AG04450 (cell line): ENCODE measurements at regions of chr10 and their contacts with region 1.

Region 1: DNA sequence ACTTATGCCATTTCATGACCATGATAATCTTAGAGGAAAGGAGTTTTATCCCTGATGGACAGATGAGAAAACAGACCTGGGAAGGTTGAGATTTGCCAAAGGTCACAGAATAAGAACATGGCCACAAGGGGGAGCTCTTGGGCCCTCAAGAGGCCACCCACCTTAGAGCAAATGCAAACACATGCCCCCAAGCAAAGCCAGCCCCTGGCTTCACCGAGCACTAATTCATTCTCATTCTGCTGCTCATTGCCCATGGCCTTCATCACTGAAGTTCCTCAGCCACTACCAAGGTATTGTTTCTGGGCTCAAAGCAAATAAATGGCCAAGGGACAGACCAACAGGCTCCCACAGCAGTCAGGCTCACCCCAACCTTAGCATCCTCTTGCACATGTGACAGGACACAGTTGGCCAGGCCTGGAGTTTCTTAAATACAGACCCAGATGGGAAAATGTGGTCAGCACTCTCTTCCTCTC is 44.2 kb downstream of the PDLIM1 start:
- DNase-seq: no peak
- H3K4me3 ChIP-seq: no peak overlapping the region
- H3K27ac ChIP-seq: peak overlapping the region; percentile 93
- H3K27me3 ChIP-seq: no peaks in the 10 kb centered on the region
- CTCF ChIP-seq: peak; percentile 78

Region 2: DNA sequence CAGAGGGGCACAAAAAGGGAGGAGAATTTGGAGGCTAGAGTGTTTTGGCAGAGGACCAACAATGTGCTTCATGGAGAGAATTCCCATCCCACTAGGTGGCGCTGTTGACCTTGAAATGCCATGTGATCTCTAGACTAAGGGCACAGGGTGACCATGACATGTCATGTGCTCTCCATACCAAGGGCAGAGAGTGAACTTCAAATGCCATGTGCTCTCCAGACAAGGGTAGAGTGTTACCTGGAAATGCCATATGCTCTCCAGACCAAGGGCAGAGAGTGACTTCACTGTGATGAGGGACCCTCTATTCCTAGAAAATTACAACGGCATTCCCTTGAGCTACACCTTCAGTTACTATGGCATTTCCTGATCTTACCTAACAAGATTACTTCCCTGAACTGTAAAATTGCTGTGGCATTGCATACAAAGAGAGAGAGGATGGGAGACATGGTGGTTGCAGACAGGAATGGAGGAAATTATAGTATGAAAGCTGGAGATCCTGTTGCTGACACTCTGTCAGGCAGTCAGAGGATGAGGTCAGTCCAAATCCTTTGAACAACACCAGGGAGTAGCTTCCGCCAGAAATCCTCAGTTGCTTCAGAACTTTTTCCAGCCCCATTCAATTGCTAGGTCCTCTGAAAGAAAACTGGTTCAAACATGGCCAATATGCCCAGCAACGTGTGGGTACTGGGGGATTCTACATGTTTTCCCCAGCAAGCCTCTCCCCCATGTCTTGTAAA is 113.4 kb before region 1 on chr10:
- CTCF ChIA-PET with region 1: interaction called, 24 read pairs
- POLR2A ChIA-PET with region 1: interaction called, 6 read pairs
- DNase-seq: peak; percentile 39
- H3K4me3 ChIP-seq: no peak overlapping the region
- H3K27ac ChIP-seq: no peak overlapping the region
- H3K27me3 ChIP-seq: peaks cover 3% of the 10 kb centered on the region
- CTCF ChIP-seq: peak; percentile 78

Region 3: GRCh38 chr10:95208702-95209391 is 37.8 kb before region 1 on chr10:
- CTCF ChIA-PET with region 1: interaction called, 28 read pairs
- POLR2A ChIA-PET with region 1: no interaction called
- DNase-seq: no peak
- H3K4me3 ChIP-seq: no peak overlapping the region
- H3K27ac ChIP-seq: no peak overlapping the region
- H3K27me3 ChIP-seq: no peaks in the 10 kb centered on the region
- CTCF ChIP-seq: peak; percentile 56

Region 4: DNA sequence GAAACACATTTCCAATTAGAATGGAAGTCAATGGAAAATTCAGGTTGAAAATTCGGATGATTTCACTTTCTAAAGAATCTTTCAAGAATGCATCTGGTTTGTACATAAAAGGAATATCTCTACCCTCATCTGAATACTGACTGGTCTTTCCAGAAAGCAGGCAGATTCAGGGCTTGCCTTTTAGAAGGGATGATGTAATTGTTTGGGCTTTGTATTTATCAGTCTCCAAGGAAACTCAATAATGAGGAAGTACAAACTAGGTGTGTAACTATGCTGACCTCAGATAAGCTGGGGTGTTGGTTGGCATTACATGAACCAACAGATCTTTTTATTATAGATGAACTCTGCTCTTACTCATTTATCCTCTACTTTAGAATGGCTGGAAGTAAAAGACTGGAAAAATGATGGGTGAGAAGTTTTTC is 20.1 kb after region 1 on chr10:
- CTCF ChIA-PET with region 1: interaction called, 19 read pairs
- POLR2A ChIA-PET with region 1: no interaction called
- DNase-seq: no peak
- H3K4me3 ChIP-seq: no peak overlapping the region
- H3K27ac ChIP-seq: peak overlapping the region; percentile 62
- H3K27me3 ChIP-seq: no peaks in the 10 kb centered on the region
- CTCF ChIP-seq: no peak

Region 5: GRCh38 chr10:95289003-95289920 is 42.6 kb after region 1 on chr10:
- CTCF ChIA-PET with region 1: interaction called, 14 read pairs
- POLR2A ChIA-PET with region 1: interaction called, 6 read pairs
- DNase-seq: no peak
- H3K4me3 ChIP-seq: peak overlapping the region; percentile 92
- H3K27ac ChIP-seq: no peak overlapping the region
- H3K27me3 ChIP-seq: no peaks in the 10 kb centered on the region
- CTCF ChIP-seq: peak; percentile 30; the same call in 1 of the 2 replicates

Region 6: GRCh38 chr10:95350219-95350829 is 103.7 kb after region 1 on chr10:
- CTCF ChIA-PET with region 1: interaction called, 507 read pairs
- POLR2A ChIA-PET with region 1: no interaction called
- DNase-seq: no peak
- H3K4me3 ChIP-seq: no peak overlapping the region
- H3K27ac ChIP-seq: no peak overlapping the region
- H3K27me3 ChIP-seq: no peaks in the 10 kb centered on the region
- CTCF ChIP-seq: no peak